ENCODE measurements at regions of chr3 and their contacts with region 1.

Region 1: GRCh38 chr3:126522363-126522788 is 1.6 kb upstream of the CHST13 start:
- DNase-seq: peak; percentile 78

Region 2: GRCh38 chr3:125767641-125768040 is 754.7 kb before region 1 on chr3:
- intact Hi-C with region 1: no loop called
- DNase-seq: no peak

Region 3: GRCh38 chr3:126394575-126395228 is 127.7 kb before region 1 on chr3 and contains the start of gene CFAP100:
- intact Hi-C with region 1: no loop called
- DNase-seq: no peak
- total RNA-seq, gene CFAP100: not detected

Region 4: DNA sequence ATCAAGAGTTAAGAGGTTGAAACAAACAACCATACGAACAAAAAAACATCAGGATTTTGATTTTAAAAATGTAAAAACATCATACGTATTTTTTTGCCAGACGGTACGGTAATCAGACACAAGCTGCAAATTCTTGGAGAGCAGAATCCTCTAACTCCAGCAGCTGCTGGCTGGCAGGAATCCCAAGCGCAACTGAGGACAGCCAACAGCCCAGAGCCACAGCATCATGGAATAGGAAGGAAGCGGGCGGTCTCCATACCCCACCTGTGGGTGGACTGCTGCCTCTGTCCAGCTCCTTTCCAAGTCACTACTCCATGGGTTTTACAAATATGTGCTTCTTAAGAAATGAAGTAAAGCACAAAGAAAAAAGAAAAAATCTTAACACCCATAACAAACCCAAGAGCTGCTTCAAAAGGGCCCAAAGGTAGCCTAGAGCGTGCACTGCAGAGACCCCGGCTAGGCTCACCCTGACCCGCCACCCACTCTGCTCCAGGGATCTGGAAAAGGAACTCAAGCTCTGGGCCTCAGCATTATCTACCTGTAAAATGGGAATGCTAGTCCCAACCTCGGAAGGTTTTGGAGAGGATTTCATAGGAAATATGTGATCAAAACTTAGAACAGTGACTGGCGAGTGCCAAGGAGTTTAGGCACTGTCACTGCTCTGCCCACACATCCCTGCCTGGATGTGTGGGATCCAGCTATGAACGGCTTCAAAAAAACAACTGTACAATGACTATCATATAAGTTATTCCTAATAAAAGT is 80.1 kb before region 1 on chr3:
- intact Hi-C with region 1: no loop called
- DNase-seq: peak; percentile 74

Region 5: GRCh38 chr3:126567696-126568438 is 45.5 kb after region 1 on chr3:
- intact Hi-C with region 1: loop called (anchors 2 kb)
- DNase-seq: no peak

Region 6: GRCh38 chr3:127325629-127325961 is 803.2 kb after region 1 on chr3:
- intact Hi-C with region 1: no loop called
- DNase-seq: no peak

Region 7: DNA sequence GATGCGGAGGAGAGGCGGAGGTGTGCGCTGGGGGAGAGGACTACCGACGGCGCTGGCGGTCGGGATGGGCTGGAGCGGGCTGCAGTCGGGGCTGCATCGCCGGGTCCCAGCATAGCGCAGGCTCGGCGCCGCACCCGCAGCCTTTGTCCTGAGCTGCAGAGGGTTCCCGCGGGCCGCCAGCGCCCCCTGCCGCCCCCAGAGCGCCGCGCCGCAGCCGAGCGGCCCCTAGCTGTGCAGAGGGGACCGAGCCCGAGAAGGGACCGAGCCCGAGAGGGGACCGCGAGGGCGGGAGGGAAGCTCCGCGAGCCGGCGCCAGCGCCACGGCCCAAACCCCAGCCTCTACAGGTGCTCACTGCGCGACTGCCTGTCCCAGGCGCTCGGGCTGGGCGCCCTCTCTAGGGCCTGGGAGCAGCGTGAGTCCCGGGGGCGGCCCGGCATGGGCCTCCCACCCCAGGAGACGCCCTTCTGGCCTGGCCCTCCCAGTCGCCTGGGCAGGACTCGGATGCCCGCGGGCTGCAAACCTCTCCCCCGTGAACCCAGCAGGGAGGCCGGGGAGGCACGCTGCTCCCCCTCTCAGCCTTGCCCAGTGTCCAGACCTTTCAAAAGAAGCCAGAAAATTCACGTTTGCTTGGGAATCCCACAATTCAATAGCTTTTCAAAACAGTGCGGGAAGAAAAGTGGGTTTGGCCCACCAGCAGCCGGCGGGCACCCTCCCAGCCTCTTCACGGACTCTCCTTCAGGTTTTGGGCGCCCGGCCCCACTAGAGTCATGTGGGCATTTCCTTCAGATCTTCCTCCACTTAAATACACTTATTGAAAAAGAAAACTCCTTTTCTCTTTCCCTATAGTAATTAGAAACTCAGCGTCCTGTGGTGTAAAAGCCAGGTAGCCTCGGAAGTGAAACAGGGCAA is 933.4 kb after region 1 on chr3:
- intact Hi-C with region 1: loop called (anchors 5 kb)
- DNase-seq: peak; percentile 81

Region 8: DNA sequence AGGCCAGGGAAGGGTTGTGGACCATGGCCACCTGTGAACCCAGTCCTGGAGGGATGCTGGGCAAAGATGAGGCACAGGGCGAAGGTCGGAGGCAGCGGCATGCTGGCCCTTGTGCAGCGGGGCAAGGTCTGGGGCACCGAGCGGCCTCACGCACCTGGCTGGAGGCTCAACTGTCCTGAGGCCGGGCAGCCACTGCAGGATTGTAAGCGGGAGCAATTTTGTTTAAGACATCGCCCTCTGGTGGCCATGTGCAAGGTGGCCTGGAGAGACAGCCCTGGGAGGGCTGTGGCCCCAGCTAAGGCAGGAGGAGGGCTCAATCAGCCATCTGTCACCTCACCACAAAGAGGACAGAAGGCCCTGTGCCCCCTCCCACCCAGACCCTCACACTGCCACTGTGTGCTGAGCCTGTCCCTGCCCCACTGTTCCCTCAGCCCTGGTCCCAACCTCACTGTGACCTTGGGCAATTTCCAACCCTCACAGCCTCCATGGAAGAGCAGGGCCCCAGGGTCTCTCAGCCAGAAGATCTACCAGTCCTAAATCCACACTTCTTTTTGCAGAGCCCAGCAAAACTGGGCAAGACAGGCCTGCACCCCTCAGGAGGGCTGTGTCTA is 1021.9 kb after region 1 on chr3:
- intact Hi-C with region 1: loop called (anchors 5 kb)
- DNase-seq: peak; percentile 82